ENCODE measurements at regions of chr1 and their contacts with region 1.

Region 1: DNA sequence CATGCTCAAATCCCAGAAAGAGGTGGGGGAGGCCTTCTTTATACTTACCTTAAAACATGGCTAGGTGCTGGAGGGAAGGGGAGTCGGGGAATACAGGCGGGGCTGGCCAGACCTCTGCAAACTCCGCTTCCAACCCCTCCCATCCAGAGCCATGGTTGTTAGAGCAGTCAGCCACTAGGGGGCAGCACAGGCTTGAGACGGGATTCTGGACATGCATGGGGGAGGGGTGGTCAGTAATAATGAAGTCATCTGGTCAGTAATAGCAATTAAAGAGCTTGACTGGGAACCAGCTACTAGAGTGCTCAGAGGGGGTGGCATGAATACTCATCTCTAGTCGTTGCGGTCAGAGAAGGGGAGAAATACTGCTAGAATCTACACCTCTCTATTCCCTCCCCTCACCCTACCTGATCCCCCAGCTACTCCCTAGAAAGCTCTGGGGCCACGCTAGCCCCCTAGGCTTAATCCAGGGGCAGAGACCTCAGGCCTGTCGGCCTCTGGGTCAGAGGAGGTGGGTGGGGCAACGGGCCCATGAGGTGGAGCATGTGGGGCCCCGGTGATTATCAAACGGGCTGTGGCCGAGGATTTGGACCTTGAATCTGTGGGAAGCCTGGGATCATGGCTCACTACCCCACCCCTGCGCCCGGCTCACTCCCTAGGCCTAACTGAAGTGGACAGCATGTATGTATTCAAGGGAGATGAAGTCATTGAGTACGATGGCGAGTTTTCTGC is 2.9 kb downstream of the CASQ1 start:
- DNase-seq: peak; percentile 85
- H3K4me3 Mint-ChIP-seq: no peak overlapping the region
- H3K27ac Mint-ChIP-seq: no peak overlapping the region
- H3K4me1 Mint-ChIP-seq: no peaks in the 10 kb centered on the region
- H3K27me3 Mint-ChIP-seq: peaks cover 4% of the 10 kb centered on the region

Region 2: GRCh38 chr1:160205242-160206035 is 12.2 kb after region 1 on chr1 and contains the start of gene PEA15:
- CTCF ChIA-PET with region 1: interaction called, 19 read pairs
- POLR2A ChIA-PET with region 1: no interaction called
- DNase-seq: peak; percentile 67
- H3K4me3 Mint-ChIP-seq: peak within 1 kb of the TSS; percentile 86
- H3K27ac Mint-ChIP-seq: peak within 1 kb of the TSS; percentile 90
- H3K4me1 Mint-ChIP-seq: peaks cover 38% of the 10 kb centered on the region
- H3K27me3 Mint-ChIP-seq: no peaks in the 10 kb centered on the region
- total RNA-seq, gene PEA15: 29.3 to 32.5 TPM

Measured in activated CD4-positive, alpha-beta T cell treated with anti-CD3 and anti-CD28 coated beads, Interleukin-2, amount 10 ng/mL, durations not matched to agents 7 days and 5 days (primary cell).